Dorsolateral prefrontal cortex (tissue), 120 donors: ENCODE measurements at regions of chr10 and their contacts with region 1.

Region 1: DNA sequence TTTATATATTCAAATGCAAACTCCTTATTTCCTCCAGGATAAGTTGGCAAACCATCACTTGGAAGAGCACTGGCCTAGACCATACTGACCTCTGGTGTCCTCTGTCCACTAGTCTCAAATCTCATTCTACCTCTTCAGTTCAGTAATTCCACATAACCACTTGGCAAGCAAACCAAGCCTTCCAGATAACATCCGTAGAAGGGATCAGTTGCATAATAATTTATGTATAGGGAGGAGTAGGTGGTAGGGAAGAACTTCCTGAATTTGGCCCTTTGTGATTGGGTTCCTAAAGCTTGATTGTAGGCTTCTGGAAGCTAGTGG is 55.0 kb downstream of the WAC start:
- DNase-seq: no peak
- H3K4me3 ChIP-seq: no peak overlapping the region
- H3K27ac ChIP-seq: peak overlapping the region in 6 of 59 donors; percentile 5 to 41 (median 15)
- H3K27me3 ChIP-seq: no peaks in the 10 kb centered on the region
- CTCF ChIP-seq: peak in 50 of 56 donors; percentile 10 to 71 (median 42)

Region 2: GRCh38 chr10:28429573-28430216 is 158.2 kb before region 1 on chr10:
- intact Hi-C with region 1: loop called in 1 of 2 experiments (anchors 2 kb)
- DNase-seq: no peak
- H3K4me3 ChIP-seq: no peak overlapping the region
- H3K27ac ChIP-seq: no peak overlapping the region
- H3K27me3 ChIP-seq: no peaks in the 10 kb centered on the region
- CTCF ChIP-seq: no peak

Region 3: DNA sequence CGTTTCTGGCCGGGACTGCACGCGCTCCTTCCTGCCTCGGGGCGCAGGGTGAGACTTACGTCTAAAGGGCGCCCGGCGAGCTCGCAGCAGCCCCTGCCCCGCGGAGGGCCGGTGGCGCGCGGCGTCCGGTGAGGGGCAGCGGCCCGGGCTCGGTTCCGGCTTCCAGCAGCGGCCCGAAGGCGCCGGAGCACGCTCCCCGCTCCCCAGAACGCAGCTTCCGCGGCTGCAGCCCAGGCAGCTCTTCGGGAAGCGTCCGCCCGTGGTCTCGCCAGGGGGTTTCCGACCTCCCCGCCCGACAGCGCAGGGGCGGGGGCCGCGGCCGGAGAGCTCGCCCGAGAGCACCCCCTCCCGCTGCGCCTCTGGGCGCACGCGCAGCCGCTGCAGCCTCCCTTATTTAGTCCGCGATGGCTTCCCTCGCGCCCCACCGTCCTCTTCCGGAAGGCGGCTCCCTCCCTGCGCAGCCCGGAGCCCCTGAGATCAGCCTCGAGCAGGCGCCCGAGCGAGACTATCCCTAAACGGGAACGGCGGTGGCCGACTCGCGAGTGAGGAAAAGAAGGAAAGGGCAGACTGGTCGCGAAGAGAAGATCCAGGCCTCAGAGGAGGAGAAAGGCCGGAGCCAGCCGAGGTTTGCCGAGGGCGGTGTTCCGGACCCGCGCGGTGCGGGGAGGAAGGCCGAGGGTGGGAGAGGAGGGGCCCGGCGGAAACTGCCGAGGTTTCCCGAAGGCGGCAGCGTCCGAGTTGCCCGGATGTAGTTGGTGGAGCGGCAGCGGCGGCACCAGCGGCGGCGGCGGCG is 55.4 kb before region 1 on chr10 and contains the start of gene WAC:
- intact Hi-C with region 1: loop called in 1 of 2 experiments (anchors 5 kb)
- DNase-seq: peak; percentile 83 to 97 (median 92)
- H3K4me3 ChIP-seq: peak within 1 kb of the TSS; percentile 73 to 99 (median 93)
- H3K27ac ChIP-seq: peak within 1 kb of the TSS; percentile 95 to 100 (median 100)
- H3K27me3 ChIP-seq: no peaks in the 10 kb centered on the region
- CTCF ChIP-seq: peak in 24 of 56 donors; percentile 3 to 41 (median 19)
- total RNA-seq, gene WAC: 123 to 241 (median 182) TPM